A673 (cell line): ENCODE measurements at regions of chr2 and their contacts with region 1.

Region 1: DNA sequence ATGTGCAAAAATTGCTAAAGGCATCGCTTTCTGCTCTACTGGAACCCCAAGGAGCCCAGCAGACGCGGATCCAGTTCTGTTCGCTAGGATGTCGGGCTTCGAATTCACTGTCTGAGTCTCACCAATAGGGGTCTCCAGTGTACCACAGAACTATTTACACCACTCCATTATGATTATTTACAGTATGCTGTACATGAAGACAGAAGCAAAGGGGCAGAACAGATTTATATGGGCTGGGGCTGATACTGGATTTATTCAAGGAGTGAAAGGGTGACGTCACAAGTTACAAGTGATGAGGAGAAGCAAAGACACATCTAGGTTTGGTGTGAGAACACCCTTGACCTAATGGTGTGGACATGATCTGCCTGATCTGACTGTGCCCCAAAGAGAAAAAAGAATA is 185.3 kb upstream of the ATP5MC3 start:
- DNase-seq: peak; percentile 87
- H3K4me3 ChIP-seq: no peak overlapping the region
- H3K27ac ChIP-seq: no peak overlapping the region
- H3K4me1 ChIP-seq: peaks cover 85% of the 10 kb centered on the region
- H3K27me3 ChIP-seq: no peaks in the 10 kb centered on the region
- CTCF ChIP-seq: peak; percentile 93

Region 2: DNA sequence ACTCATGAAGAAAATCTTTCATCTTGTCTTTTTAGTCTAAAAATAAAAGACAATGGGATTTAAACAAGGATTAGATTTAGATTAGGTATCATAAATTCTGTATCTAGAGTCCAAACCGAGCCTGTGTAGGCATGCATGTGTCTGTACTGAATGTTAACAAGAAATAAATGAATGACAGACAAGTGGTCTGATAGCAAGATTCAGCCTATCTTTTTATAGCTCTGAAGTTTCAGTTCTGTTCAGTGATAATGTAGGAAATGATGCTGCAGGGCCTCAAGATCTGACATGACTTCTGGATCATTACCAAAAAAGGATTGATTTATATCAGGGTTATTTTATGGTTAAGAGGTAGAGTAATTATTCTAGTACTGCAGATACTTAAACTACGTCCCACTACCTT is 48.3 kb before region 1 on chr2:
- CTCF ChIA-PET with region 1: no interaction called
- POLR2A ChIA-PET with region 1: no interaction called
- intact Hi-C with region 1: loop called (anchors 1 kb)
- DNase-seq: no peak
- H3K4me3 ChIP-seq: no peak overlapping the region
- H3K27ac ChIP-seq: no peak overlapping the region
- H3K4me1 ChIP-seq: no peaks in the 10 kb centered on the region
- H3K27me3 ChIP-seq: no peaks in the 10 kb centered on the region
- CTCF ChIP-seq: no peak

Region 3: GRCh38 chr2:175690113-175690837 is 323.5 kb after region 1 on chr2:
- CTCF ChIA-PET with region 1: no interaction called
- POLR2A ChIA-PET with region 1: no interaction called
- intact Hi-C with region 1: loop called (anchors 2 kb)
- DNase-seq: peak; percentile 79
- H3K4me3 ChIP-seq: no peak overlapping the region
- H3K27ac ChIP-seq: no peak overlapping the region
- H3K4me1 ChIP-seq: peaks cover 4% of the 10 kb centered on the region
- H3K27me3 ChIP-seq: no peaks in the 10 kb centered on the region
- CTCF ChIP-seq: peak; percentile 82

Region 4: DNA sequence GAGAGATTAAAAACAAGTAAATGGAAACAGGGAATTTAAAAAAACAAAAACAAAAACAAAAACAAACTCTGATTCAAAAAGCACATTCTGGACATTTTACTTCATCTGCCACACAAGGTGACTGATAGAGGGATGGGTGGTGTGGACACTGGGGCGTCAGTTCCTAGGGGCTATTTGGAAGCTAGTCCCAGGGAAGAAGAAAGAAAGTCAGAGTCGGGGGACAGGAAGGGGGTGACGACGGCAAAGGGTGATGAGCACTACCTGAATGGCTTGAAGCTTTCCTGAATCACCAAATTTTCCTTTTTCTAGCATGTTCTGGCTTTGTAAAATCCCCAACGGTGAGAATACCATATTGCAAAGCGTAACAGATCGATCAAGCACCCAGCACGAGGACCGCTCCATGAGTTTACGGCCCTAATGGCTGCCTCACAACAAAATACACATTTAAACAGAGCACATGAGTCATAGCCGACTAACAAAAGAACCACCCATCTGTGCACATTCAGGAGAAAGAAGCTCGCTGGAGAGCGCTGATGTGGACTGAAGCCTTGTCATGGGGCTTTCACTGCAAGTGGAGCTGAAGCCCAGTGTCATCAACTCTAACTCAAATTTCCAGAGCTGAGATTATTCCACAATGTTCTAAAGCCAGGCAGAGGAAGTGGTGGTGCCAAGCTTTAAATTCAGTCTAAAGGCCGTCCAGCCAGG is 456.3 kb after region 1 on chr2:
- CTCF ChIA-PET with region 1: interaction called, 10 read pairs
- POLR2A ChIA-PET with region 1: no interaction called
- intact Hi-C with region 1: no loop called
- DNase-seq: peak; percentile 15
- H3K4me3 ChIP-seq: no peak overlapping the region
- H3K27ac ChIP-seq: no peak overlapping the region
- H3K4me1 ChIP-seq: no peaks in the 10 kb centered on the region
- H3K27me3 ChIP-seq: peaks cover 7% of the 10 kb centered on the region
- CTCF ChIP-seq: no peak